ENCODE measurements at regions of chr11 and their contacts with region 1.

Region 1: DNA sequence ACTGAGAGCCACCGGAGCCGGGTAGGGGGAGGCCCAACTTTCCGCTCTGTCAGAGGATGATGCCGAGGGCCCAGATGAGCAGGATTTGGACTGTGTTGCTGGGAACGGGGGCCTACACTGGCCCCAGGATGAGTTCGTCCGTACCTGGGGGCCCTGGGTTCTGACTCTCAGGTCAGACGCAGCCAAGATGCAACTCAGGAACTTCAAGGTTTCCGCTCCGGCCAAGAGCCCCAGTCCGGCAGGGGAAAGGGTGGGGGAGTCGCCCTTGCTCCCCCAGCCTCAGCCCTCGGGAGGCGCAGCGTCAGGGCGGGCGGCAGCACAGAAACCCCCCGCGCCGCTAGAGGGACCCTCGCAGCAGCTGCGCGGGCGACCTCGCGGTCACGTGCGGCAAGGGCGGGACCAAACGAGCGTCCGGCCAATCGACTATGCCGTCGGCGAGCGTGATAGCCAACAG is 241 bp upstream of the ARL2 start:
- DNase-seq: peak; percentile 84
- ATAC-seq: peak; percentile 83
- H3K4me3 Mint-ChIP-seq: peak overlapping the region; percentile 90
- H3K27ac Mint-ChIP-seq: peak overlapping the region; percentile 96
- H3K4me1 Mint-ChIP-seq: peaks cover 26% of the 10 kb centered on the region
- H3K27me3 Mint-ChIP-seq: no peaks in the 10 kb centered on the region
- CTCF ChIP-seq: no peak

Region 2: GRCh38 chr11:64110465-64111375 is 903.0 kb before region 1 on chr11:
- CTCF ChIA-PET with region 1: no interaction called
- POLR2A ChIA-PET with region 1: no interaction called
- intact Hi-C with region 1: no loop called
- DNase-seq: no peak
- ATAC-seq: no peak
- H3K4me3 Mint-ChIP-seq: no peak overlapping the region
- H3K27ac Mint-ChIP-seq: no peak overlapping the region
- H3K4me1 Mint-ChIP-seq: no peaks in the 10 kb centered on the region
- H3K27me3 Mint-ChIP-seq: no peaks in the 10 kb centered on the region
- CTCF ChIP-seq: no peak

Region 3: DNA sequence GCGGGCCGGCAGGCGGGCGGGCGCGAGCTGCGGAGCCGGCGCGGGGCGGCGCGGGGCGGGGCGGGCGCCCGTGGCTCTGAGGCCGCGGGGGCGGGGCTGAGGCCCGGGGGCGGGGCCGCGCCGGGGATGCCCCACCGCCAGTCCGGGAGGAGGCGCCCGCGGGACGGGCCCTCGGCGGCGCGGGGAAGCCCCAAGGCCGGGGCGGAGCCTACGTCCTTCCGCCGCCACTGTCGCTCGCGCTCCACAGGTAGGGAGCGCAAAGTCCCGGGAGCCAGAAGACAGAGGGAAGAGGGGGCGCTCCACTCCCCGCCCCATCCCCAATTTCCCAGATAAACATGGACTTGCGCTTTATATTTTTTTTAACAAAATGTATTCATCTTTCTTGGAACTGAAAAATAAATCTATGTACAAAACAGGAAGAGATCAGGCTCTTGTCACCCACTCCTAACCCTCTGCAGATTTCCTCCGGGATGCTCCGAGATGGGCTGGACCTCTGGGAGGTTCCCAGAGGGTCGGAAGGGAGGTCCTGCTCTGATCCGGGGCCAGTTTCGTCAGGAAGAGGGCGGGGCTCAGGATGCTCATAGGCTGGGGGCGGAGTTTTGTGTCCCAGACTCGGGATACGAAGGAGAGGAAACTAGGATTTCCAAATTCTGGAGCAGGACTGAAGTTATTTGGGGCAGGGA is 210.4 kb before region 1 on chr11 and contains the start of gene MAP4K2:
- CTCF ChIA-PET with region 1: interaction called, 3 read pairs
- POLR2A ChIA-PET with region 1: interaction called, 7 read pairs
- intact Hi-C with region 1: loop called (anchors 5 kb)
- DNase-seq: peak; percentile 91
- ATAC-seq: peak; percentile 80
- H3K4me3 Mint-ChIP-seq: peak within 1 kb of the TSS; percentile 87
- H3K27ac Mint-ChIP-seq: peak within 1 kb of the TSS; percentile 91
- H3K4me1 Mint-ChIP-seq: peaks cover 52% of the 10 kb centered on the region
- H3K27me3 Mint-ChIP-seq: no peaks in the 10 kb centered on the region
- CTCF ChIP-seq: no peak
- total RNA-seq, gene MAP4K2: 69.1 and 73.6 TPM in 2 replicates

Region 4: GRCh38 chr11:64924102-64924851 is 89.4 kb before region 1 on chr11 and contains the start of gene PPP2R5B:
- CTCF ChIA-PET with region 1: interaction called, 4 read pairs
- POLR2A ChIA-PET with region 1: interaction called, 6 read pairs
- intact Hi-C with region 1: loop called (anchors 1 kb)
- DNase-seq: peak; percentile 83
- ATAC-seq: peak; percentile 95
- H3K4me3 Mint-ChIP-seq: peak within 1 kb of the TSS; percentile 93
- H3K27ac Mint-ChIP-seq: peak within 1 kb of the TSS; percentile 96
- H3K4me1 Mint-ChIP-seq: peaks cover 27% of the 10 kb centered on the region
- H3K27me3 Mint-ChIP-seq: no peaks in the 10 kb centered on the region
- CTCF ChIP-seq: no peak
- total RNA-seq, gene PPP2R5B: 12.0 and 12.6 TPM in 2 replicates

Region 5: GRCh38 chr11:65040847-65041621 is 27.3 kb after region 1 on chr11 and contains the start of gene SAC3D1:
- CTCF ChIA-PET with region 1: interaction called, 8 read pairs
- POLR2A ChIA-PET with region 1: interaction called, 7 read pairs
- intact Hi-C with region 1: loop called (anchors 1 kb)
- DNase-seq: peak; percentile 89
- ATAC-seq: peak; percentile 93
- H3K4me3 Mint-ChIP-seq: peak within 1 kb of the TSS; percentile 93
- H3K27ac Mint-ChIP-seq: peak within 1 kb of the TSS; percentile 95
- H3K4me1 Mint-ChIP-seq: peaks cover 11% of the 10 kb centered on the region
- H3K27me3 Mint-ChIP-seq: no peaks in the 10 kb centered on the region
- CTCF ChIP-seq: no peak
- total RNA-seq, gene SAC3D1: 3.8 and 5.4 TPM in 2 replicates

Region 6: DNA sequence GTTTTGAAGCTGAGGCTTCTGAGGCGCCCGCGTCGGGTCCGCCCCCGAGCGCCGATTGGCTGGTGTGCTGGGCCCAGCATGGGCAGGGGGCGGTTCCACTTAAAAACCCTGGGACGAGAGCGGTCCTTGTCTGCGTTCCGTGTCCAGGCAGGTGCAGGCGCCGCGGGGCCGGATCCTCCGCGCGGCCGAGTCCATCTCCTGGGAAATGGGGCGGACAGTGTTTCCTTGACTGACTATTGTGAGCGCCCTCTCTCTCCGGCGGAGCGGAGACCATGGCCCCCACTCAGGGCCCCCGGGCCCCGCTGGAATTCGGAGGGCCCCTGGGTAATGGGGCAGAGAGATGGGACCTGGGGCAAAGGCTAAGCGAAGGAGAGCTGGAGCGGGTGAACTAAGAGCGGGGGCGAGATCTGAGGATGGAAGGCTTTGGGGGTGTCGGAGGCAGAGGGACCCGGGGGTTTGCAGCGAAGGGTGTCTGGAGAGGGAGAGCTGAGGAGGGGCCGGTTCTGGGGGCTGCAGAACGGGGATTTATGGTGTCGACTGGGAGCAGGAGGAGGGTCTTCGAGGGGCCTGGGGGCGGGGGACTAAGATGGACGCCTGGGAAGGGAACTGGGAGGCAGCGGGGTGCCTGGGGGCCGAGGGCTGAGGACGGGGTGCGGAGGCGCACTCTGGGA is 98.2 kb after region 1 on chr11 and contains the start of gene TM7SF2:
- CTCF ChIA-PET with region 1: interaction called, 12 read pairs
- POLR2A ChIA-PET with region 1: interaction called, 12 read pairs
- intact Hi-C with region 1: loop called (anchors 1 kb)
- DNase-seq: peak; percentile 90
- ATAC-seq: peak; percentile 78
- H3K4me3 Mint-ChIP-seq: peak within 1 kb of the TSS; percentile 89
- H3K27ac Mint-ChIP-seq: peak within 1 kb of the TSS; percentile 77
- H3K4me1 Mint-ChIP-seq: peaks cover 50% of the 10 kb centered on the region
- H3K27me3 Mint-ChIP-seq: no peaks in the 10 kb centered on the region
- CTCF ChIP-seq: no peak
- total RNA-seq, gene TM7SF2: 24.6 and 25.4 TPM in 2 replicates

Region 7: DNA sequence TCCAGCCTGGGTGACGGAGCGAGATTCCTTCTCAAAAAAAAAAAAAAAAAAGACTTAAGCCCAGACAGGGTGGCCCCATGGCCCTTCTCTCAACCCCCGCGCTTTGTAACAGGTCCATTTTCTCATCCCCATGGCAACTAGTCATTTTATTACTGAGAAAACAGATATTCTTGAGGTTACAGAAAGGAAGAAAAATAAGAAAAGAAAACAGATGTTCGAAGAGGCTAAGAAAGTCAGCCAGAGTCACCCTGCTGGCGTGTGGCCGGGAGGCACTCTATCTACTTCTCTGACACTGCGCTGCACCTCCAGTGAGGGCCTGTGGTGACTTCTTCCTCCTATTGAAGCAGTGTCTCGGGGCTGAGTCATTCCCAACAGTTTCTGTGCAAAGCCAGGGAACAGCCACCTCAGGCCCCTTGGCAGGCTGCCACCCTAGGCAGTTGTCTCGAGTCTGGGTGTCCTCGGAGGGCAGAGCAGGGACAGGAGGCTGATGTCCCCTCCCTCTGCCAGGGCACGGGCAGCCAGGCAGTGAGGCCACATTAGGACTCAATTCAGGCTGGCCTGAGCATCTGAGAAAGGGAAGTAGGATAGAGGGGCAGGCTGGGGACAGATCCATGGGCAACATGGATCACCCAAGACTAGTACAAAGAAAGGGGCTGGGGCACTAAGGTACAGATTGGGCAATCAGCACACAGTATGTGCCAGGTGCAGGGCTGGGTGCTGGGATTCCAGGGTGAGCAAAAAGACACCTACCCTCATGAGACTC is 137.0 kb after region 1 on chr11:
- CTCF ChIA-PET with region 1: no interaction called
- POLR2A ChIA-PET with region 1: no interaction called
- intact Hi-C with region 1: no loop called
- DNase-seq: no peak
- ATAC-seq: peak; percentile 53
- H3K4me3 Mint-ChIP-seq: no peak overlapping the region
- H3K27ac Mint-ChIP-seq: no peak overlapping the region
- H3K4me1 Mint-ChIP-seq: peaks cover 35% of the 10 kb centered on the region
- H3K27me3 Mint-ChIP-seq: no peaks in the 10 kb centered on the region
- CTCF ChIP-seq: no peak

Region 8: GRCh38 chr11:65251476-65251875 is 237.8 kb after region 1 on chr11:
- CTCF ChIA-PET with region 1: no interaction called
- POLR2A ChIA-PET with region 1: no interaction called
- intact Hi-C with region 1: no loop called
- DNase-seq: no peak
- ATAC-seq: no peak
- H3K4me3 Mint-ChIP-seq: no peak overlapping the region
- H3K27ac Mint-ChIP-seq: no peak overlapping the region
- H3K4me1 Mint-ChIP-seq: no peaks in the 10 kb centered on the region
- H3K27me3 Mint-ChIP-seq: peaks cover 2% of the 10 kb centered on the region
- CTCF ChIP-seq: no peak

Region 9: GRCh38 chr11:65261591-65262380 is 248.1 kb after region 1 on chr11 and contains the start of gene POLA2:
- CTCF ChIA-PET with region 1: no interaction called
- POLR2A ChIA-PET with region 1: no interaction called
- intact Hi-C with region 1: loop called (anchors 5 kb)
- DNase-seq: peak; percentile 98
- ATAC-seq: peak; percentile 83
- H3K4me3 Mint-ChIP-seq: peak within 1 kb of the TSS; percentile 90
- H3K27ac Mint-ChIP-seq: peak within 1 kb of the TSS; percentile 91
- H3K4me1 Mint-ChIP-seq: peaks cover 27% of the 10 kb centered on the region
- H3K27me3 Mint-ChIP-seq: no peaks in the 10 kb centered on the region
- CTCF ChIP-seq: no peak
- total RNA-seq, gene POLA2: 37.1 and 43.4 TPM in 2 replicates